ENCODE measurements at regions of chr14 and their contacts with region 1.

Region 1: DNA sequence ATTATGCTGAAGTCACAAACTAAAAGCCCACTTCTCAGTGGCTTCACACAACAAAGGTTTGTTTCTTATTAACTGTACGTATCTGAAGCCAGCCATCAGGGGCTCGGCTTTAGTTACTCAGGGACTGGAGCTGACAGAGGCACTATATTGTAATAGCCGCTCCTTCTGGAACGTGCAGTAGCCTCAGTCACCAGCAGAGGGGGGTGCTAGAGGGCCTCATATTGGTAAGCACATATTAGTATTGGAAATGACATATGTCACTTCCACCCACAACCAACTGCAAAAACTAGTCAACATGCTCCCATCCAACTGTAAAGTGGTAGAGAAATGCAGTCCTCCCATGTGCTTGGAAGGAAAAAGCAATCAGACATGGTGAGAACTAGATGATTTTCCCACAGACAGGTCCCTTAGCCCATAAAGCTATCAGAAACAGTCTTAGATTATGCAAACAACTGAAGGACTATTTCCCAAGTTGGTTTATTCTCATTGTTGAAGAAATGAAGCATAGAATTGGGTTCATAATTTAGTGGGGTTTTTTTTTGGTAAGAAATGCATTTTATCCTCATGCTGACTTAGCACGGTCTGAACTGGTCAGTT is 183.6 kb upstream of the G2E3 start:
- DNase-seq: peak; percentile 86
- ATAC-seq: peak; percentile 100
- H3K4me3 Mint-ChIP-seq: no peak overlapping the region
- H3K27ac Mint-ChIP-seq: no peak overlapping the region
- H3K4me1 Mint-ChIP-seq: no peaks in the 10 kb centered on the region
- H3K27me3 Mint-ChIP-seq: peaks cover 18% of the 10 kb centered on the region
- CTCF ChIP-seq: peak; percentile 78

Region 2: GRCh38 chr14:30355431-30355913 is 19.9 kb before region 1 on chr14:
- CTCF ChIA-PET with region 1: no interaction called
- POLR2A ChIA-PET with region 1: no interaction called
- intact Hi-C with region 1: no loop called
- DNase-seq: peak; percentile 47
- ATAC-seq: peak; percentile 81
- H3K4me3 Mint-ChIP-seq: no peak overlapping the region
- H3K27ac Mint-ChIP-seq: peak overlapping the region; percentile 57
- H3K4me1 Mint-ChIP-seq: peaks cover 11% of the 10 kb centered on the region
- H3K27me3 Mint-ChIP-seq: peaks cover 5% of the 10 kb centered on the region
- CTCF ChIP-seq: no peak

Region 3: DNA sequence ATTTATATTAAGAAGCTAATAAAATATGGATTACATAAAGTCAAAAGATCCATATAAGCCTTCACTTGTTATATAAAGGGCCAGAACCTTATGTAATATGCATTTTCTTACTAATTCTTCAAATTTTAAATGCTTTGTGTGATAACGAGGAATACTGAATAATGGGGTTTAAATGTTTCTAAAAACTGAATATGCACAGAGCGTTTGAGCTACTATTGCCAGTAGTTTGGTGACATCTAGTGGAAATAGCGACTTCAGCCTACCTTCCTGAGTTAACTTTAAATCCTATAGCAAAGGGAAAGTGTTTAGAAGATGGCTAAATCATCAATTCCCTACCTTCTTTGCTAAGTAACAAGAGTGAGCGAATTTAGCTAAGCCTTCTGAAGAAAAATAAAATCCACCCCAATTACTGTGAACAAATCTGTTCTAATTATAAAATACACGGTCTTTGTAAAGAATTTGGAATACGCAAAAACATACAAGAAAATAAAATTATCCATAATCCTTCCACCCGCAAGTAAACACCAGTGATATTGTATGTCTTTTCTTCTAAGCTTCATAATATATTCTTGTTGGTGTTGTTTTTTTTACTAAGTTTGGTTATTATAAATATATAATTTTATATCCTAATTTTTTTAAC is 68.1 kb after region 1 on chr14:
- CTCF ChIA-PET with region 1: interaction called, 18 read pairs
- POLR2A ChIA-PET with region 1: no interaction called
- intact Hi-C with region 1: no loop called
- DNase-seq: no peak
- ATAC-seq: no peak
- H3K4me3 Mint-ChIP-seq: no peak overlapping the region
- H3K27ac Mint-ChIP-seq: no peak overlapping the region
- H3K4me1 Mint-ChIP-seq: no peaks in the 10 kb centered on the region
- H3K27me3 Mint-ChIP-seq: peaks cover 13% of the 10 kb centered on the region
- CTCF ChIP-seq: peak; percentile 13

Region 4: GRCh38 chr14:30521899-30522736 is 146.7 kb after region 1 on chr14:
- CTCF ChIA-PET with region 1: interaction called, 62 read pairs
- POLR2A ChIA-PET with region 1: no interaction called
- intact Hi-C with region 1: loop called (anchors 1 kb)
- DNase-seq: no peak
- ATAC-seq: peak; percentile 71
- H3K4me3 Mint-ChIP-seq: no peak overlapping the region
- H3K27ac Mint-ChIP-seq: no peak overlapping the region
- H3K4me1 Mint-ChIP-seq: peaks cover 10% of the 10 kb centered on the region
- H3K27me3 Mint-ChIP-seq: no peaks in the 10 kb centered on the region
- CTCF ChIP-seq: peak; percentile 71